ENCODE measurements at regions of chr19 and their contacts with region 1.

Region 1: DNA sequence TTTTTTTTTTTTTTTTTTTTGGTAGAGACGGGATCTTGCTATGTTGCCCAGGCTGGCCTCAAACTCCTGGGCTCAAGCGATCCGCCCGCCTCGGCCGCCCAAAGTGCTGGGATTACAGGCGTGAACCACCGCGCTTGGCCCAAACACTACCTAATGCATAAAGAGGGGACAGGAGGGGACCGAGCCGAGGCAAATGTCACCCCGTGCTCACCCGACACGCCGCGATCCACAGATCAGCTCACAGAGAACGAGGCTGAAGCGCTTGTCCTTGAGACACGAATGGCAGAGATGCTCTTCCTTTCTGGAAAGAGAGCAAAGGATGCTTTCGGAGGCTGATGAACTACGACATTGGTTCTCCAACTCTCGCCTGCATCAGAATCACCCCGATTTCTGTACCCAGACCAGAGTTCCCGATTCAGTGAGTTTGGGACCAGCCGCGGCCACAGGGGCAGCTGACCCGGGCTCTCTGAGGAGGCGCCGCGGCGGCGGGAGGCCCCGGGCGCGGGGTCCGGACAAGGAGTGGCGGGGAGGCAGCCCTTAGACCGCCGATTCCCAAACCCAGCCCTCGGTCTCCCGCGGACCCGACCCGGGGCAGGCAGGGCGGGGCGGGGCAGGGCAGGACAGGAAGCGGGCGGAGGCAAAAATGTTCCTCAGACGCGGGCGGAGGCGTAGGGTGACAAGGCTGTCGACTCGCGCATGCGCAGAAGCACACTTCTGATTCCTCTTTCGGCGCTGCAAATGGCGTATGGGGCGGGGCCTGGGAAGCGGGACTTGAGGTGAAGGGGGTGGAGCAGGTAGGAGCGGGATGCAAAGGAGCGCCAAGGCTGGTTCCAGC is at the start of gene ZNF699:
- DNase-seq: peak; percentile 79
- H3K4me3 ChIP-seq: peak within 1 kb of the TSS; percentile 89
- CTCF ChIP-seq: no peak

Region 2: DNA sequence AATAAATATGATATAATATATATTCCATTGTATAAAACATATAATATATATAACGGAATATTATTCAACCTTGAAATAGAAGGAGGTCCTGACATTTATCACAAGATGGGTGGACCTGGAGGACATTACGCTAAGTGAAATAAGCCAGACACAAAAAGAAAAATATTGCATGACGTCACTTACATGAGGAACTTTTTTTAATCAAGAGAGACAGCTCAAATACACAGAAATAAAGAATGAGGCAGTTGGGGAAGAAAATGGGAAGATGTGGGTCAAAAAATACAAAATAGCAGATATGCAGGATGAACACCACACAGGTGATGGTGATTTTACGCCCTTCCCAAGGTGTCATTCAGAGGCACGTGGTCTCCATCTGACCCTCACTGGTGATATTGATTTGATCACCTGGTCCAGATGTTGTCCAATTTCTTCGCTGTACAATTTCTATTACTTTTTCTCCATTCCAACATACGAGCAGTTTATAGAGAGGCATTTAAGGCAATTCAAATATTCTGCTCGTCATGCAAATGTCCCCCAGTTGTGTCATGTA is 169.7 kb before region 1 on chr19:
- CTCF ChIA-PET with region 1: no interaction called
- POLR2A ChIA-PET with region 1: no interaction called
- DNase-seq: no peak
- H3K4me3 ChIP-seq: peak overlapping the region; percentile 71
- CTCF ChIP-seq: no peak

Region 3: GRCh38 chr19:9323919-9324583 is 14.7 kb after region 1 on chr19 and contains the start of gene ZNF559:
- CTCF ChIA-PET with region 1: interaction called, 15 read pairs
- POLR2A ChIA-PET with region 1: interaction called, 6 read pairs
- DNase-seq: peak; percentile 69
- H3K4me3 ChIP-seq: peak within 1 kb of the TSS; percentile 85
- CTCF ChIP-seq: peak; percentile 38

Measured in AG04449 (cell line).